Activated CD4-positive, alpha-beta T cell treated with anti-CD3 and anti-CD28 coated beads for 36 hours (primary cell): ENCODE measurements at regions of chr2 and their contacts with region 1.

Region 1: DNA sequence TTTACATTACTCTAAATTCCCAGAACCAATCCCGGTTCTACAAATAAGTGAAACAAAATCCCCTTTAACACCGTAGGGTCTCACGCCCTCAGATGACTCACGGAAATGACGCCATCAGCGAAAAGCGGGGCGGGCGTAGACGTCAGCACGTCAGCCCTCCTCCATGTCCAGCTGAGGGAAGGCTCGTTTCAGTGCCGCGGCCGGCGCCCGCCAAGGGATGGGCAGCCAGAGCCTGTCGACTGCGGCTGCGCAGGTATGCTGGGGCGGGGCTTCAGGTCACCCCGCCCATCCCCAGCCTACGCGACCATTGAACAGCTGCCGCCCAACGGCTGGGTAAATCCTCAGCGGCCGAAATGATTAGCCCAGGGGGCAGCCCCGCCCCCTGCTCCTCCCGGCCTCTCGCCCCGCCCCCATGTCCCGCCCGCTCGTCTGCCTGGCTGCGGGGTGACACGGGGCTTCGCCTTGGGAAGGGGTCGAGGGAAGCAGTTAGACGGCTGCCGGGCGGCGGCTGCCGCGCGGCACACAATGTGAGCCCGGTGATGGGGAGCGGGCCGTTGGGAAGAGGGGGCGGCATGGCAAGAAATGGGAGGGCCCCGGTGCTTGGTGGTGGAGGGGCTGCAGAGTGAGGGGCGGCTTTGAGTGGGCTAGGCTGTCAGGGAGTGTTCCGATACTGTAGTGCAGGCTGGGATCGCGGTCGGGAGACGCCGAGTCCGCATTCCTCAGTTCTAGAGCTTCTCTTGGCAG is at the start of gene NBEAL1:
- DNase-seq: peak; percentile 98
- ATAC-seq: peak; percentile 96
- H3K4me3 Mint-ChIP-seq: peak within 1 kb of the TSS; percentile 93
- H3K27ac Mint-ChIP-seq: peak within 1 kb of the TSS; percentile 89
- H3K4me1 Mint-ChIP-seq: peaks cover 32% of the 10 kb centered on the region
- H3K27me3 Mint-ChIP-seq: no peaks in the 10 kb centered on the region
- total RNA-seq, gene NBEAL1: 8.2 to 13.0 TPM

Region 2: GRCh38 chr2:201642579-201643215 is 1371.9 kb before region 1 on chr2:
- CTCF ChIA-PET with region 1: no interaction called
- POLR2A ChIA-PET with region 1: no interaction called
- intact Hi-C with region 1: loop called in 1 of 2 experiments (anchors 5 kb)
- DNase-seq: peak; percentile 91
- ATAC-seq: peak; percentile 82
- H3K4me3 Mint-ChIP-seq: peak overlapping the region; percentile 79
- H3K27ac Mint-ChIP-seq: peak overlapping the region; percentile 84
- H3K4me1 Mint-ChIP-seq: peaks cover 9% of the 10 kb centered on the region
- H3K27me3 Mint-ChIP-seq: no peaks in the 10 kb centered on the region

Region 3: GRCh38 chr2:202238234-202239197 is 776.1 kb before region 1 on chr2 and contains the start of gene SUMO1:
- CTCF ChIA-PET with region 1: no interaction called
- POLR2A ChIA-PET with region 1: no interaction called
- intact Hi-C with region 1: loop called in 1 of 2 experiments (anchors 2 kb)
- DNase-seq: peak; percentile 95
- ATAC-seq: peak; percentile 93
- H3K4me3 Mint-ChIP-seq: peak within 1 kb of the TSS; percentile 98
- H3K27ac Mint-ChIP-seq: peak within 1 kb of the TSS; percentile 97
- H3K4me1 Mint-ChIP-seq: peaks cover 28% of the 10 kb centered on the region
- H3K27me3 Mint-ChIP-seq: no peaks in the 10 kb centered on the region
- total RNA-seq, gene SUMO1: 132 to 164 TPM

Region 4: DNA sequence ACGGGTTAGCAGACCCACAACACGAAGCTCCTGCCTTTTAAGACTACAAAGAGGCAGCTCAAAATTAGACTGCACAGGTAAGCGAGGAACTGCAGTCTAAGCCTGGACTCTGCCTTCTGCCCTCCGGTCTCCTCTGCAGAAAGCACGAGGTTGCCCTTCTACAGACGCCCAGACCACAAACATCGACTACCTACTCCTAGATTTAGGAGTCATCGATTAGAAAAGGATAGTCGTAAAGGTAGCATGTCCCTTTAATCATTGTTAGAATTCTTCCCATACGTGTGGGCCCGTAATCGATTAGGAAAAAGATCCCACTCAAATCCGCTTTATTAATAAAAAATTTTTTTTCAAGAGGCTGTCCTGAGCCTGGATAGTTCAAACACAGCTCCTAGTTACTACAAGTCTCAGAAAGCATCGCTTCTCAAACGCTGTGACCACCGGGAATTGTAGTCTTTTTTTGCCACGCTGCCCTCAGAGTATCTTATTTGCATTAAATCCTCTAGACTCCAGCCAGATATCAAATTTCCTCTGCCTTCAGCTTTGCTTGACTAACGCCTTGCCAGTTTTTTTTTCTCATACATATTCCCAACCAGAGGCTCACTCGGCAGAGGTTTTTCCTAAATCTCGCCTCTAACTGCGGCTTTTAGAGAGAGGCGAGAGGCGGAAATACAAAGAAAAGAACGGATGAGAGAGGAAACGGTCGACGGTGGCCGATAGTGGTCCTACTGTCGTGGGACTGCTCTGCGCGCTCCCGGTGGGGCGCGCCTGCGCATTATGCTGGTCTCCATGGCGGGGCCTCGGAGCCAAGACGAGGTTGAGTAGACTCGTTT is 102.9 kb before region 1 on chr2 and contains the starts of genes CARF and WDR12:
- CTCF ChIA-PET with region 1: no interaction called
- POLR2A ChIA-PET with region 1: no interaction called
- intact Hi-C with region 1: loop called (anchors 1 to 2 kb)
- DNase-seq: peak; percentile 96
- ATAC-seq: peak; percentile 84
- H3K4me3 Mint-ChIP-seq: peak within 1 kb of the TSS; percentile 84
- H3K27ac Mint-ChIP-seq: peak within 1 kb of the TSS; percentile 95
- H3K4me1 Mint-ChIP-seq: peaks cover 30% of the 10 kb centered on the region
- H3K27me3 Mint-ChIP-seq: no peaks in the 10 kb centered on the region
- total RNA-seq, gene CARF: 6.2 to 9.0 TPM
- total RNA-seq, gene WDR12: 92.5 to 129 TPM

Region 5: DNA sequence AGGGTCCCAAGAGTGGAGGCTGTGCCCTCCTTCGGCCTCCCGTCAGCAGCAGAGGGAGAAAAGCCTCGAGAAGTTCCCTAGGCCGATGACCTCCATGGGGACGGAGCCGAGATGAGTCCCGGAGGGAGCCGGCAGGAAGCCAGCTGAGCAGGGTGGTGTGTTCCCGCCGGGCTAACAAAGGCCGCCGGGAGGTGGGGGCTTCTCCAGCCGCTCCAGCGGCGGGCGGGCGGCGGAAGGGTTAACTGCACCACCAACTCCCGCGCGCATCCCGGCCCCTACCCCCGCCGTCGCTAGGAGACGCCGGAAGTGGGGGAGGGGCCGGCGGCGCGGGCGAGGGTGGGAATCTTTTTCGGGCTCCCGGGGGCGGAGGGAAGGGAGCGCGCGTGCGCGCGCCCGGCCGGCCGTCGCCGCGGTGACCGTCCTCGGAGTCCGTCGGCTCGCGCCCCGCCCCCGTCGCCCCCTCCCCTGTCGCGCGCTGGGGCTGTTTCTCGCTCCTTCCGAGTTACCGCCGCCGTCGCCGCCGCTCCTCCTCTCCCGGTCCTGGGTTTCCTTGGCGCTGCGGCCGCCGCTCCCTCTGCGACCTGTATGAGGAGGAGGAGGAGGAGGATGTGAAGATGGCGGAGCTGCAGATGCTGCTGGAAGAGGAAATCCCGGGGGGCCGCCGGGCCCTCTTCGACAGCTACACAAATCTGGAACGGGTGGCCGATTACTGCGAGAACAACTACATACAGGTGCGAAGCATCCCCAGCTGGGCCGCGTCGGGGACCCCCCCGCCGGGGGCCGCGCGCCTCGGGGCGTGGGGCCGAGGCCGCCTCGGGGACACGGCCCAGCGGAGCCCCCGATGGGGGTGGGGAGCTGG is 313.5 kb after region 1 on chr2 and contains the start of gene ABI2:
- CTCF ChIA-PET with region 1: no interaction called
- POLR2A ChIA-PET with region 1: no interaction called
- intact Hi-C with region 1: loop called in 1 of 2 experiments (anchors 2 kb)
- DNase-seq: peak; percentile 77
- ATAC-seq: peak; percentile 52
- H3K4me3 Mint-ChIP-seq: peak within 1 kb of the TSS; percentile 91
- H3K27ac Mint-ChIP-seq: peak within 1 kb of the TSS; percentile 84
- H3K4me1 Mint-ChIP-seq: peaks cover 31% of the 10 kb centered on the region
- H3K27me3 Mint-ChIP-seq: no peaks in the 10 kb centered on the region
- total RNA-seq, gene ABI2: 40.6 to 57.6 TPM